Dorsolateral prefrontal cortex (tissue), 120 donors: ENCODE measurements at regions of chr9 and their contacts with region 1.

Region 1: GRCh38 chr9:27726244-27727081 is 153.2 kb upstream of the C9orf72 start:
- DNase-seq: peak in 9 of 10 donors; percentile 50 to 87 (median 62)
- H3K4me3 ChIP-seq: peak overlapping the region in 38 of 59 donors; percentile 9 to 58 (median 36)
- H3K27ac ChIP-seq: peak overlapping the region in 7 of 59 donors; percentile 5 to 67 (median 35)
- H3K27me3 ChIP-seq: no peaks in the 10 kb centered on the region
- CTCF ChIP-seq: peak; percentile 65 to 93 (median 86)

Region 2: GRCh38 chr9:27414220-27414761 is 312.2 kb before region 1 on chr9:
- intact Hi-C with region 1: no loop called
- DNase-seq: no peak
- H3K4me3 ChIP-seq: peak overlapping the region in 43 of 59 donors; percentile 11 to 64 (median 47)
- H3K27ac ChIP-seq: peak overlapping the region in 58 of 59 donors; percentile 12 to 90 (median 78)
- H3K27me3 ChIP-seq: no peaks in the 10 kb centered on the region
- CTCF ChIP-seq: no peak

Region 3: DNA sequence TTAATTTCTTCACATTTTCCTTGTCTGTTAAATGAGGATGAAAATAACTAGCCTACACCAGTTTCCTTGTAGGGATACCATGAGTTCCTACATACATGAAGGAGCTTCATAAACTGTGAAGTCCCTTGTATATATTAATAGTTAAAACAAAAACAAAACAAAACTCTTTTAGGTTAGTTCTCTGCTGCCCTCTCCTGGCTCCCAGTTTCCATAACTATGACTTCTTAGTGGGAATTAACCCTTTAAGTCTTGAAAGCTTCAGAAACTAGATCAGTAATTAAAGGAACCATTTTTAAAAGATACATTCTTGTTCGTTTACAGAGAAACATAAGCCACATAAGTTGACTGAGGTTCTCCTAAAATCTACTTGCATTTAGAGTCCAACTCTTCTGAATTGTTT is 346.8 kb after region 1 on chr9:
- intact Hi-C with region 1: loop called (anchors 2 to 10 kb)
- DNase-seq: no peak
- H3K4me3 ChIP-seq: no peak overlapping the region
- H3K27ac ChIP-seq: no peak overlapping the region
- H3K27me3 ChIP-seq: no peaks in the 10 kb centered on the region
- CTCF ChIP-seq: peak; percentile 29 to 78 (median 60)

Region 4: DNA sequence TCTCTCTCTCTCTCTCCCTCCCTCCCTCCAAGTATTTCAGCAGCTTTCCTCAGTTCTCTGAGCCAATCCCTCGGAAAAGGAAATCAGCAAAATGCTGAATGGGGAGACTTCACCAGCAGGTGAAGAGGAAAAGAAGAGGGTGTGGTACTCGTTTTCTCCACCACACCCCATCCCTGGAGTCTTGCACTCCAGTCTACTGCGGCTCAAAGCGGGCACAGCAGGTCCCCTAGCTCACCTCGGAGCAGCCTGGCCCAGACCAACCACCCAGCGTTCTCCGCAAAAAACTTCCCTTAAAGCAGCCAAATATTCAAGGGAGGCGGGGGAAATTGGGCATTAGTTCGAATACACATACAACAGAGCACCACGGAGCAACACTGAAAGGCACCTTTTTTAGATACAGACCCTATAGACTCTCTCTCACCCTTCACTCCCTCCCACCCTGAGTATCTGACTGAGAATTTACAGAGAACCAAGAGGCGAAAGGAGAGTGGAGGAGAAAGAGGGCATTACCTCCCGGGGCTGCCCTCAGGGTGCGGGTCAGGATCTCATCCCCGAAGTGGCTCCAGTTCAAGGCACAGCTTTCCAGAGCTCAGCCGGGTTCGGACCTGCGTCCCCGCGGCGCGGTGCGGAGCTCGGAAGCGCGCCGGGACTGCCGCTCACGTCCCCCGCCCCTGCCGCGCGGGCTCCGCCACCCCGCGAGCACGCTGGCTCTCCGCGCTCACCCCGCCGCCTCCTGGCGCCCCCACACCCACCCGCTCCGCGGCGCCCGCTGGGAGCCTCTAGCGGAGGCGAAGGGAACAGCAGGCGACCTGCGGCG is 1485.3 kb after region 1 on chr9:
- intact Hi-C with region 1: loop called (anchors 5 to 10 kb)
- DNase-seq: peak in 6 of 10 donors; percentile 10 to 80 (median 54)
- H3K4me3 ChIP-seq: peak overlapping the region; percentile 42 to 75 (median 62)
- H3K27ac ChIP-seq: peak overlapping the region in 16 of 59 donors; percentile 3 to 72 (median 40)
- H3K27me3 ChIP-seq: peaks cover 0 to 52% (median 24%) of the 10 kb centered on the region in 45 donors
- CTCF ChIP-seq: peak in 54 of 56 donors; percentile 33 to 88 (median 70)